Activated CD4-positive, alpha-beta T cell treated with anti-CD3 and anti-CD28 coated beads, Interleukin-2, amount 10 ng/mL, durations not matched to agents 24 days and 14 days (primary cell): ENCODE measurements at regions of chr4 and their contacts with region 1.

Region 1: DNA sequence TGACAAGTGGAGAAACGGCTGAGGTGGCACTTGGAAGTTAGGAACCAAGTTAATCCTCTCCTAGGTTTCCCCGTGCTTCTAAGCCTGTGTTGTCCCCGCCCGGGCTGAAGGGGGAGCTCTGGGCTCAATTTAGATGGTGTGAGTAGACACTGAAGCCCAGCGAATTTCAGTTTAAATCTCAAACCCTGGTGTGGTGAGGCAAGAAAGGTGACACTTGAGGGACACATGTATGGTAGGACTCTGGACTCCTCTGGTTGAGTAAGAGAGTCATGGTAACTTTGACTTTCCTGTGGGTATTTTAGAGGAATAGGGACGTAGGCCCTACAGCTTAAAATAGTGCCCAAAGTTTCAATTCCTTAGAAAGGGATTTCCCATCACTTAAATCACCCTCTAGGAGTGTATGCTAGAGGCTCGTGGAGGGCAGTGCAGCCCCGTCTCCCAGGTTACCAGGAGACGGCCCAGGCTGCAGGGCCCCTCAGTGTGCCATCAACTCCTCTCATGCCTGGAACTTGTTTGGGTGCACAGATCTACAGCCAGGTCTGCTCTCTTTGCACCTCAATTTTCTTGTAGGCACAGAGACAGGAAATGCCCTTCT is 24.0 kb downstream of the HAND2 start:
- DNase-seq: peak; percentile 84
- H3K4me3 Mint-ChIP-seq: no peak overlapping the region
- H3K27ac Mint-ChIP-seq: no peak overlapping the region
- H3K4me1 Mint-ChIP-seq: peaks cover 11% of the 10 kb centered on the region
- H3K27me3 Mint-ChIP-seq: peaks cover 86% of the 10 kb centered on the region

Region 2: DNA sequence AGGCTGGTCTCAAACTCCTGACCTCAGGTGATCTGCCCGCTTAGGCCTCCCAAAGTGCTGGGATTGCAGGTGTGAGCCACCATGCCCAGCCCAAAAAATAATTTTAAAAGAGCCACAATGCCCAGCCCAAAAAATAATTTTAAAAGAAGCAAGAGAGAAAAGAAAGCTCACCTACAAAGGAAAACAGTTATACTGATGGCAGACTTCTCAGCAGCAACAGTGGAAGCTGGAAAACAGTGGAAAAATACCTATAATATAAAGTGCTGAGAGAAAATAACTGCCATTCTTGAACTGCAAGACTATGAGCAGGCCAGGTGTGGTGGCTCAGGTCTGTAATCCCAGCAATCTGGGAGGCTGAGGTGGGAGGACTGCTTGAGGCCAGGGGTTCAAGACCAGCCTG is 158.6 kb before region 1 on chr4:
- intact Hi-C with region 1: no loop called
- DNase-seq: no peak
- H3K4me3 Mint-ChIP-seq: no peak overlapping the region
- H3K27ac Mint-ChIP-seq: no peak overlapping the region
- H3K4me1 Mint-ChIP-seq: peaks cover 2% of the 10 kb centered on the region
- H3K27me3 Mint-ChIP-seq: peaks cover 18% of the 10 kb centered on the region

Region 3: DNA sequence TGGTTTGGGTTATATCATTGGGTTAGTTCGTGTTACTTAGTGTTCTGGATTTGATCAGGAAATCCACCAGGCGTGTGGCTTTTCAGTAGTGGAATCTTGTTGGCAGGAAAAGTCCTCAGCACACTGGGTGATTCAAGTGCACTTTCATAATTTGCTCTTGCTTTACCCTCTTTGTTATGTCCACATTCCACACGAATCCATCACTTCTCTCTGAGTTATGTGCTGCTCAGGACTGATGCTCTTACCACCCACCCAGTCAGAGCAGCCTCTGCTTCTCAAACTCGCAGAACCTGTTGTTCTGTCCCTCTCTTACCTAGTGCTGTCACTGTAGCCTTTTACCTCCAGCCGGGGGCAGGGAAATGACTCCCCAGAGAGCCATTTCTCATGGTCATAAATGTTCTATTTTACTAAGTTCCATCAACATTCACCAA is 69.9 kb before region 1 on chr4:
- intact Hi-C with region 1: no loop called
- DNase-seq: no peak
- H3K4me3 Mint-ChIP-seq: no peak overlapping the region
- H3K27ac Mint-ChIP-seq: no peak overlapping the region
- H3K4me1 Mint-ChIP-seq: peaks cover 18% of the 10 kb centered on the region
- H3K27me3 Mint-ChIP-seq: peaks cover 2% of the 10 kb centered on the region

Region 4: GRCh38 chr4:173522123-173522950 is 16.3 kb after region 1 on chr4:
- intact Hi-C with region 1: loop called (anchors 2 kb)
- DNase-seq: peak; percentile 58
- H3K4me3 Mint-ChIP-seq: peak overlapping the region; percentile 28
- H3K27ac Mint-ChIP-seq: peak overlapping the region; percentile 56
- H3K4me1 Mint-ChIP-seq: peaks cover 7% of the 10 kb centered on the region
- H3K27me3 Mint-ChIP-seq: peaks cover 88% of the 10 kb centered on the region

Region 5: GRCh38 chr4:173626277-173626676 is 120.3 kb after region 1 on chr4:
- intact Hi-C with region 1: no loop called
- DNase-seq: no peak
- H3K4me3 Mint-ChIP-seq: no peak overlapping the region
- H3K27ac Mint-ChIP-seq: no peak overlapping the region
- H3K4me1 Mint-ChIP-seq: no peaks in the 10 kb centered on the region
- H3K27me3 Mint-ChIP-seq: no peaks in the 10 kb centered on the region

Region 6: GRCh38 chr4:173752610-173753230 is 246.7 kb after region 1 on chr4:
- intact Hi-C with region 1: loop called (anchors 10 kb)
- DNase-seq: peak; percentile 77
- H3K4me3 Mint-ChIP-seq: no peak overlapping the region
- H3K27ac Mint-ChIP-seq: no peak overlapping the region
- H3K4me1 Mint-ChIP-seq: no peaks in the 10 kb centered on the region
- H3K27me3 Mint-ChIP-seq: no peaks in the 10 kb centered on the region

Region 7: GRCh38 chr4:174120446-174121295 is 614.6 kb after region 1 on chr4:
- intact Hi-C with region 1: loop called (anchors 1 kb)
- DNase-seq: peak; percentile 63
- H3K4me3 Mint-ChIP-seq: no peak overlapping the region
- H3K27ac Mint-ChIP-seq: no peak overlapping the region
- H3K4me1 Mint-ChIP-seq: no peaks in the 10 kb centered on the region
- H3K27me3 Mint-ChIP-seq: peaks cover 27% of the 10 kb centered on the region

Region 8: DNA sequence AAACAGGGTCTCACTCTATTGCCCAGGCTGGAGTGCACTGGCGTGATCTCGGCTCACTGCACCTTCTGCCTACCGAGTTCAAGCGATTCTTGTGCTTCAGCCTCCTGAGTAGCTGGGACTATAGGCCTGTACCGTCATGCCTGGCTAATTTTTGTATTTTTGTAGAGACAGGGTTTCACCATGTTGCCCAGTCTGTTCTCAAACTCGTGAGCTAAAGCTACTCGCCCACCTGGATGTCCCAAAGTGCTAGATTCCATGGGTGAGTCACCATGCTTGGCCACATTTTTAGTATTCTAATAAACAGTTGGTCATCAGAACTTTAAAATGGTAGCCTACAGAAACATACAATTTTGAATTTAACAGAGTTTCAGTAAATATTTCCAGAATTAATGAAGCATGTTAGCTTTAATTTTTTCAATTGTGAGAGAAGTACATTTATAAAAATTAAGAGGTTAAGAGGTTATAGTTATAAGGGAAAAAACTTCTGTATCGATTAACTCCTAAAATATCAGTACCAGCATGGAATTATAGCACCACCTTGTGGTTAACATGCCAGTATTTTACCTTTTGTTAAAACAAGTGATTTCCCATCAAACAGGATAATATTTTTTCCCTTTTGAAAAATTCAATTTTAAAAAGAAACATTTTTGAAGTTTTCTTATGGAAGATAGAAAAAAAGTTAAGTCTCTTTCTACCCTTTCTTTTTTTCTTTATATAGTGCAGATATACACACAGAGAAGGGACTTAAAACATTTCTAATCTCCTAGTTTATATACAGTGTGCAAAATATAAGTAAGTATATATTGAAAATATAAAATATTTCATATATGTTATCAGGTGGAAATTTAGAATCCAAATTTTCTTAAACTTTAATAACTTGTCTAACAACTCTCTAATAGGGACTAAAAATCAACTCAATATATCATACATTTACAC is 813.1 kb after region 1 on chr4:
- intact Hi-C with region 1: loop called (anchors 5 kb)
- DNase-seq: peak; percentile 60
- H3K4me3 Mint-ChIP-seq: no peak overlapping the region
- H3K27ac Mint-ChIP-seq: no peak overlapping the region
- H3K4me1 Mint-ChIP-seq: no peaks in the 10 kb centered on the region
- H3K27me3 Mint-ChIP-seq: no peaks in the 10 kb centered on the region